Breast epithelium (tissue), 4 donors: ENCODE measurements at regions of chr14 and their contacts with region 1.

Region 1: GRCh38 chr14:22483863-22484593 is 105.0 kb downstream of the DAD1 start:
- DNase-seq: no peak
- H3K4me3 ChIP-seq: no peak overlapping the region
- H3K27ac ChIP-seq: peak overlapping the region in 1 of 2 donors; percentile 32
- H3K4me1 ChIP-seq: peaks cover 0 to 2% of the 10 kb centered on the region in 2 donors
- H3K27me3 ChIP-seq: no peaks in the 10 kb centered on the region
- CTCF ChIP-seq: no peak
- POLR2A ChIP-seq: no peak

Region 2: DNA sequence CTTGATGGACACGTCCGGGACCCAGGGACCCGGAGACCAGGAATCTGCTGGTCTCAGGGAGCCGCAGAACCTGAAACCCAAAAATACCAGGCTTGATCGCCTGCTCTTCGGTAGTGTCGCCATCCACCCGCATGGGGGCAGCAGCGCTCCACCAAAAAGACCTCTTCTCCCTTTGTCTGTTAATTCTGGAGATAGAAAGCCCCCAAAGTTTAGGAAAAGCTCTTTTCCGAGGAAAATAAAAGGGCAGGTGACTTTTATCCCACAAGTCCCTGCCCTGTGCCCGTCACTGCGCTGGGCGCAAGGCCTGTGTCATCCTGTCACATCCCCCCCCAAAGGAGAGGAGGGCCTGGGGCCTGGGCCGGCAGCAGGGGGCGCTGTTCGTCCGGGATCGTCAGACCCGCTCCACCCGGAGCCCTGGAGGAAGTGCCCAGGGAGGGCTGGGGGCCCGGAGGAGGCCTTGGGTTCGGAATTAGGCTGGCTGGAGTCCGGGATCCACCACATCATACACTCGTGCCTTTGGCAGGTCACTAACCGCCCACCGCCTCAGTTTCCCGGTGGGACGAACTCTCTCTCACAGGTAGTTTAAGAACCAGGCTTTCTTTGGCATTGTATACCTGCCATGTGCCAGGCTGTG is 73.1 kb after region 1 on chr14:
- intact Hi-C with region 1: loop called (anchors 10 kb)
- DNase-seq: peak; percentile 68 to 82
- H3K4me3 ChIP-seq: peak overlapping the region; percentile 25 to 58 (median 32)
- H3K27ac ChIP-seq: peak overlapping the region; percentile 73 to 88
- H3K4me1 ChIP-seq: peaks cover 0 to 9% of the 10 kb centered on the region in 2 donors
- H3K27me3 ChIP-seq: no peaks in the 10 kb centered on the region
- CTCF ChIP-seq: peak; percentile 99 to 100 (median 100)
- POLR2A ChIP-seq: no peak

Region 3: GRCh38 chr14:24079491-24080141 is 1595.6 kb after region 1 on chr14:
- intact Hi-C with region 1: loop called (anchors 10 kb)
- DNase-seq: no peak
- H3K4me3 ChIP-seq: no peak overlapping the region
- H3K27ac ChIP-seq: no peak overlapping the region
- H3K4me1 ChIP-seq: no peaks in the 10 kb centered on the region
- H3K27me3 ChIP-seq: no peaks in the 10 kb centered on the region
- CTCF ChIP-seq: no peak
- POLR2A ChIP-seq: no peak